Endothelial cell of umbilical vein (primary cell): ENCODE measurements at regions of chr1 and their contacts with region 1.

Region 1: GRCh38 chr1:61184040-61184713 is 101.8 kb downstream of the NFIA start:
- DNase-seq: peak; percentile 97
- H3K4me3 ChIP-seq: peak overlapping the region in 2 of 3 experiments; percentile 12 to 42
- H3K27ac ChIP-seq: peak overlapping the region; percentile 14
- H3K4me1 ChIP-seq: peaks cover 27% of the 10 kb centered on the region
- H3K27me3 ChIP-seq: no peaks in the 10 kb centered on the region
- CTCF ChIP-seq: no peak
- POLR2A ChIP-seq: peak; percentile 14

Region 2: DNA sequence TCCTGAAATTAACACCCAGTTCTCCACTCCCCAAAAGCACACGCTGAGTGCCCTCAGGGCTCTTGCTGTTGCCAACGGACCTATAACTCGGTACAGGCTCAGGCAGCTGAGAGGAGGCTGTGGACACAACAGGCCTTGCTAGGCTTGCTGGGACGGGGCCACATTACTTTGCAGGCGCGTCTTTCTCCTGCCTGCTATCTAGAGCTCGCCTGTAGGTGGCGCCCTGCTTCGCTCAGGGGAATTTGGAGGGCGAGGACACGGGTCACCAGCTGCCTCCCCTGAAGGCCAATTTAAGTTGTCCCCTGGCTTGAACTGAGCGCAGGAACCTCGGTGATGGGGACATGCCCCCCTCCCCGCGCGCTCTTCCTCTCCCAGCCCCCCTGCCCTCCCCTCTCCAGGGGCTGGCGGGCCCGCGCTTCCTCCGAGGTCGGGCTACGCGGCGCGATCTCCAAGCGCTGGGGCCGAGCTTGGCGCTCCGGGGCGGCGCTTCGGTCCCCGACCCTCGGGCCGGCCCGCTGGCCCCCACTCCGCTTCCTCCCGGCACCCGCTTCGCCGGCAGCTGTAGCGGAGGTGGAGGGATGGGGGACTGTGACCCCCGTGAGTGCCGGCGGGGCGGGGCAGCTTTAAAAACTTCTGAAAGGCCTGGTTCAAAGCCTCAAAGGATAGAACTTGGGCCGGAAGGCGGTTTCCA is 134.2 kb before region 1 on chr1:
- CTCF ChIA-PET with region 1: interaction called, 10 read pairs
- POLR2A ChIA-PET with region 1: no interaction called
- dilution Hi-C with region 1: no loop called
- intact Hi-C with region 1: no loop called
- DNase-seq: peak; percentile 93
- H3K4me3 ChIP-seq: peak overlapping the region; percentile 62 to 95 (median 92)
- H3K27ac ChIP-seq: peak overlapping the region; percentile 84
- H3K4me1 ChIP-seq: peaks cover 16% of the 10 kb centered on the region
- H3K27me3 ChIP-seq: no peaks in the 10 kb centered on the region
- CTCF ChIP-seq: peak; percentile 89 to 96
- POLR2A ChIP-seq: peak; percentile 40

Region 3: GRCh38 chr1:61056573-61057439 is 127.4 kb before region 1 on chr1:
- CTCF ChIA-PET with region 1: interaction called, 4 read pairs
- POLR2A ChIA-PET with region 1: no interaction called
- dilution Hi-C with region 1: no loop called
- intact Hi-C with region 1: loop called (anchors 2 kb)
- DNase-seq: peak; percentile 74
- H3K4me3 ChIP-seq: peak overlapping the region; percentile 69 to 77 (median 75)
- H3K27ac ChIP-seq: peak overlapping the region; percentile 45
- H3K4me1 ChIP-seq: peaks cover 8% of the 10 kb centered on the region
- H3K27me3 ChIP-seq: no peaks in the 10 kb centered on the region
- CTCF ChIP-seq: no peak
- POLR2A ChIP-seq: no peak

Region 4: GRCh38 chr1:61132176-61133001 is 51.8 kb before region 1 on chr1:
- CTCF ChIA-PET with region 1: no interaction called
- POLR2A ChIA-PET with region 1: interaction called, 3 read pairs
- dilution Hi-C with region 1: no loop called
- intact Hi-C with region 1: loop called (anchors 2 kb)
- DNase-seq: peak; percentile 91
- H3K4me3 ChIP-seq: peak overlapping the region in 1 of 3 experiments; percentile 53
- H3K27ac ChIP-seq: peak overlapping the region; percentile 75
- H3K4me1 ChIP-seq: peaks cover 23% of the 10 kb centered on the region
- H3K27me3 ChIP-seq: no peaks in the 10 kb centered on the region
- CTCF ChIP-seq: no peak
- POLR2A ChIP-seq: no peak